HepG2 (cell line): ENCODE measurements at regions of chr19 and their contacts with region 1.

Region 1: DNA sequence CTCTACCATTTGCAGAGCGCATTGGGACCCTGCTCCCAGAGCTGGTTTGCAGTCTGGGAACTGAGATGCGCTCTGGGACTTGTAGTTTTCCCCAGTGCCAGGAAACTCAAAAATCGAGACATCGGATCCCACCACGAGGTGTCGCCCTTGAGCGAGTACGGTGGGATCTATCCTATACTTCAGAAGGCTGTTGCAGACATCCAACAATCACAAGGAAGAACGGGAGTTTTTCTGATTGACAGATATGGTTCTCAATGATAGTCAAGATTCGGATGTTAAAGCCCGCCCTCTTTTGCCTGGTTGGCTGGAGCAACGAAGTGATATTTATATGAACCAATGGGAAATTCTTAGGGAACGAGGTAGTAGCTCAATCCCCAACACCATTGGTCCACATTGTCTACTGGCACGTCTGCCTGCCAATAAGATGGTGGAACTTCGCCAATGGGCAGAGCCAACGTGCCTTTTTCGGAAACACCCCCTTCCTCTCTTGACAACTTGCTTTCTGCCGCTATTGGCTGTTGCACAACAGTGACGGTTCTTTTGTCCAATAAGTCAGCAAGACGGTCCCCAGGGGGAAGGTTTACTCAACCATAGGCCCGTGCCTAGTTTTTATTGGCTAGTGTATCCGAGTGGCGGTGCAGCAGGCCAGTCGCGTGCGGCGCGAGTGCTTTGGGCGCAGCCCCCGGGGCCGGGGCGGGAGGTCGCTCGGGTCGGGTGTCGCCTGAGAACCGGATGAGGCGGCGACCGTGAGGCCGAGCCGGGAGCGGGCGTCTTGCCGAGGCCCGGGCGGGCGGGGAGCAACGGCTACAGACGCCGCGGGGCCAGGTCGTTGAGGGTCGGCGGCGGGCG is at the start of gene DNM2:
- DNase-seq: peak; percentile 100
- ATAC-seq: peak; percentile 95
- H3K4me3 ChIP-seq: peak within 1 kb of the TSS; percentile 92 to 99 (median 95)
- H3K27ac ChIP-seq: peak within 1 kb of the TSS; percentile 80
- H3K4me1 ChIP-seq: peaks cover 38% of the 10 kb centered on the region
- H3K27me3 ChIP-seq: no peaks in the 10 kb centered on the region; a peak in 1 of 5 replicates
- CTCF ChIP-seq: peak; percentile 95
- EP300 ChIP-seq: peak in 1 of 2 experiments; percentile 26; a peak in 1 of 4 replicates
- POLR2A ChIP-seq: peak; percentile 33 to 75; a peak in 3 of 4 replicates
- RAD21 ChIP-seq: peak; percentile 83
- total RNA-seq, gene DNM2: 41.7 and 48.2 TPM in 2 replicates

Region 2: DNA sequence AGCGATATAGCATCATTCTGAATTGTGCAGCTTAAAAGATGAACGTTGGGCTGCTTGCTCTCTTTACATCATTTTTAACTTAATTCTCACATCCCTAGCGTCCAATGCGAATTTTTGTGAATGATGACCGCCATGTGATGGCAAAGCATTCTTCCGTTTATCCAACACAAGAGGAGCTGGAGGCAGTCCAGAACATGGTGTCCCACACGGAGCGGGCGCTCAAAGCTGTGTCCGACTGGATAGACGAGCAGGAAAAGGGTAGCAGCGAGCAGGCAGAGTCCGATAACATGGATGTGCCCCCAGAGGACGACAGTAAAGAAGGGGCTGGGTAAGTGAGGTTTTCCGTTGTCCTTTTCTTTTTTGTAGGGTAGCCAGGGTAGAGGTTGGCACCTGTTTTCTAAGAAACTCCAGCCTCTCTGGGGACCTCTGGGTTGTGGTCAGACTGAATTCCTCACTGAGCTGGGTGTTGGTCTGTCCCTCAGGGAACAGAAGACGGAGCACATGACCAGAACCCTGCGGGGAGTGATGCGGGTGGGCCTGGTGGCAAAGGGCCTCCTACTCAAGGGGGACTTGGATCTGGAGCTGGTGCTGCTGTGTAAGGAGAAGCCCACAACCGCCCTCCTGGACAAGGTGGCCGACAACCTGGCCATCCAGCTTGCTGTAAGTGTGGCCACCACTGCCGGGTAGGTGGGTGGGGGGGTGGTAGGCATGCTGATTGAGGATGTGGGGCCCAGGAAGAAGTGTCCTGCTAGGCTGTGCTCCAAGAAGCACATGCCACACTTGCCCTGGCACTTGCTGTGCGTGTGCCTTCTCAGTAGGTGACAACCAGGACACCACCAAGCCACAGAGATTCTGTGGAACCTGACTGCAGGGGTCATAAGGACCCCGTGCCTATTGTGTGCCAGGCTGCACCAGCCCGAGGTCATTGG is 46.4 kb before region 1 on chr19:
- CTCF ChIA-PET with region 1: no interaction called
- POLR2A ChIA-PET with region 1: no interaction called
- in situ Hi-C with region 1: no loop called
- intact Hi-C with region 1: no loop called
- DNase-seq: no peak
- ATAC-seq: no peak; the same call in 2 of the 3 replicates
- H3K4me3 ChIP-seq: no peak overlapping the region
- H3K27ac ChIP-seq: no peak overlapping the region
- H3K4me1 ChIP-seq: no peaks in the 10 kb centered on the region
- H3K27me3 ChIP-seq: no peaks in the 10 kb centered on the region
- CTCF ChIP-seq: no peak
- EP300 ChIP-seq: no peak
- POLR2A ChIP-seq: no peak
- RAD21 ChIP-seq: no peak

Region 3: DNA sequence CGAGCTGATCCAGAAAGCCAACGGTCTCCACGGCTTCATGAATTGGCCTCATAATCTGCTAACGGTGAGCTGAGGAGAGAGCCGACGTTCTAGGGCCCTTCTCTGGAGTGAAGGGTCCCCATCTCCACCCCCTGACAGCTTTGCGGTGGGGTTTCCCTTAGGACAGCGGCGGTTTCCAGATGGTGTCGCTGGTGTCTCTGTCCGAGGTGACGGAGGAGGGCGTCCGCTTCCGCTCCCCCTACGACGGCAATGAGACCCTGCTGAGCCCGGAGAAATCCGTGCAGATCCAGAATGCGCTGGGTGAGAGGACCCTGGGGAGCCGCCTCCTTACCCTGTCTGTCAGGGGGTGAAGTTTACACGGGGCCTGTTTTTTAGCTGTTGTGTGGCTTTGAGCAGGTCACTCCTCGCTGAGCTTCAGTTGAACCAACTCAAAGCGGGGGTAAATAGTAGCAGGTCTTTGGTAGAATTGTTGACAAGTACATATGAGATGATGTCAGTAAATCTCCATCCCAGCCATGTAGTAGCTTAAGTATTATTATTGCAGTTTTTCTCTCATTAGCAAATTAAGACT is 15.5 kb before region 1 on chr19:
- CTCF ChIA-PET with region 1: no interaction called
- POLR2A ChIA-PET with region 1: interaction called, 26 read pairs
- in situ Hi-C with region 1: no loop called
- intact Hi-C with region 1: no loop called
- DNase-seq: peak; percentile 56
- ATAC-seq: peak; percentile 84
- H3K4me3 ChIP-seq: peak overlapping the region; percentile 73 to 95 (median 90)
- H3K27ac ChIP-seq: peak overlapping the region; percentile 62
- H3K4me1 ChIP-seq: peaks cover 11% of the 10 kb centered on the region
- H3K27me3 ChIP-seq: no peaks in the 10 kb centered on the region; a peak in 1 of 5 replicates
- CTCF ChIP-seq: peak; percentile 75
- EP300 ChIP-seq: no peak
- POLR2A ChIP-seq: no peak
- RAD21 ChIP-seq: peak; percentile 32; the same call in 1 of the 2 replicates

Region 4: GRCh38 chr19:10748924-10749434 is 31.4 kb after region 1 on chr19:
- CTCF ChIA-PET with region 1: no interaction called
- POLR2A ChIA-PET with region 1: interaction called, 5 read pairs
- in situ Hi-C with region 1: no loop called
- intact Hi-C with region 1: loop called (anchors 1 kb)
- DNase-seq: peak; percentile 94
- ATAC-seq: peak; percentile 86
- H3K4me3 ChIP-seq: peak overlapping the region in 2 of 3 experiments; percentile 4 to 60; a peak in 2 of 6 replicates
- H3K27ac ChIP-seq: peak overlapping the region; percentile 80
- H3K4me1 ChIP-seq: peaks cover 91% of the 10 kb centered on the region
- H3K27me3 ChIP-seq: no peaks in the 10 kb centered on the region
- CTCF ChIP-seq: 0 out of 2 replicates have a peak, but pooled peaks have one; percentile 12
- EP300 ChIP-seq: peak in 1 of 2 experiments; percentile 47; a peak in 1 of 4 replicates
- POLR2A ChIP-seq: peak in 1 of 2 experiments; percentile 34; a peak in 1 of 4 replicates
- RAD21 ChIP-seq: no peak

Region 5: DNA sequence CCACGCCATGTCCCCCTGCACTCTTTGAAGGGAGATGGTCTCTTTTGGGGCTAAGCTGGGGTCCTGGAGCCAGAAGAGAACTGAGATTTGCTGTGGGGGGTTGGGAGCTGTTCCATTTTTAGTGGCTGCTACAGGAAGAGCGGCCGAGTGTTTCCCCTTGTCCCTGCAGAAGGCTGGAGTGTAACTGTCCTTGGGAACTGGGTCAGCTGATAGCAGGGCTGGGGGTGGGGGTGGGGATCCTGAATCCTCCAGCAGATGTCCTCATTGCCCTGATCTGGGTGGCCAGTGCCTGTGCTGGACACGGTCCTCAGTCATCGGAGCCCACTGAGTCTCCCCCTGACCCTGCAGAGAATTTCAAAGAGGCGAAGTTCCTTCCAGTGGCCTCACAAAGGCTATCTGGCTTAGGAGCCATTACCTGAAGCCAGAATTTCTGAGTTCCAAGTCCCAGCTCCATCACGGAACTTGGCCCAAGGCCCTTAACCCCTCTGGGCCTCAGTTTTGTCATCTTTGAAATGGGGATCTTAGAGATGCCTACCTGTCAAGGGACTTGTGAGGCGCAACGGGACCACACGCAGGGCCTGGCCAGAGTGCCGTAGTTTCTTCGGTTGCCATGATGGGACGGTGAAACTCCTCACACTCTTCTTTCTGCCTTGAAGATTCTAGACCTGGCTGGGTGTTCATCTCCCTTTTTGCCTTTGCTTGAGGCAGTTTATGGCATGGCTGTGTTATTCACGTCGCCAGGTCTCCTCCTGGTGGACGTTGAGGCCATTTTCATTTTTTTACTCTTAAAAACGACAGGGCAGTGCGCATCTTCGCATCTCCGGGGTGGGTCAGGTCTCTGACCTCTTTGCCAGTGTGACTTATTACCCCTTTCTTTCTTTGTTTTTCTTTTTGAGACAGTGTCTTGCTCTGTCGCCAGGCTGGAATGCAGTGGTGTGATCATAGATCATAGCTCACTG is 52.2 kb after region 1 on chr19:
- CTCF ChIA-PET with region 1: interaction called, 18 read pairs
- POLR2A ChIA-PET with region 1: interaction called, 7 read pairs
- in situ Hi-C with region 1: loop called (anchors 5 kb)
- intact Hi-C with region 1: loop called (anchors 1 kb)
- DNase-seq: peak; percentile 76
- ATAC-seq: peak; percentile 92
- H3K4me3 ChIP-seq: peak overlapping the region in 1 of 3 experiments; percentile 21; a peak in 1 of 6 replicates
- H3K27ac ChIP-seq: peak overlapping the region; percentile 67
- H3K4me1 ChIP-seq: peaks cover 60% of the 10 kb centered on the region
- H3K27me3 ChIP-seq: no peaks in the 10 kb centered on the region
- CTCF ChIP-seq: peak; percentile 80
- EP300 ChIP-seq: 0 out of 4 replicates have a peak, but pooled peaks of 1 of the 2 experiments have one; percentile 33
- POLR2A ChIP-seq: 0 out of 4 replicates have a peak, but pooled peaks of 1 of the 2 experiments have one; percentile 23
- RAD21 ChIP-seq: peak; percentile 65

Region 6: GRCh38 chr19:10835754-10836477 is 118.3 kb after region 1 on chr19 and contains the start of gene TMED1:
- CTCF ChIA-PET with region 1: no interaction called
- POLR2A ChIA-PET with region 1: interaction called, 28 read pairs
- in situ Hi-C with region 1: no loop called
- intact Hi-C with region 1: loop called (anchors 10 kb)
- DNase-seq: peak; percentile 98
- ATAC-seq: peak; percentile 93
- H3K4me3 ChIP-seq: peak within 1 kb of the TSS; percentile 51 to 74 (median 72); a peak in 5 of 6 replicates
- H3K27ac ChIP-seq: peak within 1 kb of the TSS; percentile 93
- H3K4me1 ChIP-seq: peaks cover 40% of the 10 kb centered on the region
- H3K27me3 ChIP-seq: no peaks in the 10 kb centered on the region
- CTCF ChIP-seq: peak; percentile 66
- EP300 ChIP-seq: no peak
- POLR2A ChIP-seq: peak; percentile 60 to 63; a peak in 3 of 4 replicates
- RAD21 ChIP-seq: peak; percentile 59
- total RNA-seq, gene TMED1: 26.4 and 51.8 TPM in 2 replicates

Region 7: DNA sequence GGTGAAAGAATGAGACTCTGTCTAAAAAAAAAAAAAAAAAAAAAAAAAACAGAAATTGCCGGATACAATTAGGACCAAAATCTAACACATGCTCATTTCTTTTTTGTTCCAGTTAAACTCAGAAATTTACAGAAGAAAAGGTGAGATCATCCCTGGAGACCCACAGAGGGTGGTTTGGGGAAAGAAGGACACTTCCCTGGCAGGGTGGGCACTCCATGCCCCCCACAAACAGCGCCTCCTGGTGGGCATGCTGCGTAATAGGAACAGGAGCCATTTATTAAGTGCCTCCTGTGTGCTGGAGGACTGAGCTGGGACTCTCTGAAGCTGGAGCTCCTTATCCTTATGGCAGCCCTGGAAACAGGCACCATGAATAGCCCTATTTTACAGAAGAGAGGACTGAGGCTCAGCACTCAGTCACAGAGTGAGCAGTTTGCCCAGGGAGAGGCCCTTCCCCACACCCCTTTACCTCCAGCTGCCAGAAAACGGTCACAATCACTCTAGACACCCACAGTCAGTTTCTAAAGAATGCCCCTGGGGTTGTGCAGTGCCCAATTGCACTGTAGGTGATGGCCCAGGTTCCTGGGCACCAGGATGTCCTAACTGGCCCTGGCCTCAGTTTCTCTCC is 140.7 kb after region 1 on chr19:
- CTCF ChIA-PET with region 1: interaction called, 3 read pairs
- POLR2A ChIA-PET with region 1: interaction called, 12 read pairs
- in situ Hi-C with region 1: no loop called
- intact Hi-C with region 1: loop called (anchors 1 kb)
- DNase-seq: no peak
- ATAC-seq: peak; percentile 22; the same call in 1 of the 3 replicates
- H3K4me3 ChIP-seq: no peak overlapping the region
- H3K27ac ChIP-seq: no peak overlapping the region
- H3K4me1 ChIP-seq: peaks cover 30% of the 10 kb centered on the region
- H3K27me3 ChIP-seq: no peaks in the 10 kb centered on the region
- CTCF ChIP-seq: peak; percentile 75
- EP300 ChIP-seq: no peak
- POLR2A ChIP-seq: no peak
- RAD21 ChIP-seq: no peak

Region 8: DNA sequence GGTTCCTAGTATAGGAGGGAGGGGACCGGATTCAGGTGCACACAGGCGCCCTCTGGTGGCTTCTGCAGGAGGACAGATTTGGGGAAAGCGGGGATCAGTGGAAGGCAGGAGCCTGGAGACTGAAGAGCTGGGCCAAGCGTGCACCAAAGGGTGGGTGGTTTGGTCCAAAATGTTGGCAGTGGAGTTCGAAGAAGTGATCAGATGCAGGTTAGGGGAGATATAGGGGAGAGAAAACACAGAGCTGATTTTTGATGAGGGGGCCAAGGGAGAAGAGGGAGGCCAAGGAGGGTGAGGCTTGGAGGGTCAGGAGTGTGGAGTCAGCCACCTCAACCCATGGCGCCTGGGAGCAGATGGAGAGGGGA is 146.9 kb after region 1 on chr19:
- CTCF ChIA-PET with region 1: interaction called, 4 read pairs
- POLR2A ChIA-PET with region 1: interaction called, 12 read pairs
- in situ Hi-C with region 1: no loop called
- intact Hi-C with region 1: loop called (anchors 1 kb)
- DNase-seq: peak; percentile 68
- ATAC-seq: peak; percentile 86
- H3K4me3 ChIP-seq: peak overlapping the region in 2 of 3 experiments; percentile 51 to 63; a peak in 5 of 6 replicates
- H3K27ac ChIP-seq: no peak overlapping the region
- H3K4me1 ChIP-seq: peaks cover 50% of the 10 kb centered on the region
- H3K27me3 ChIP-seq: no peaks in the 10 kb centered on the region
- CTCF ChIP-seq: peak; percentile 90
- EP300 ChIP-seq: no peak
- POLR2A ChIP-seq: no peak
- RAD21 ChIP-seq: no peak